Activated B cell treated with CpG ODN at 0.5 μM for 24 hours (primary cell): ENCODE measurements at regions of chr1 and their contacts with region 1.

Region 1: DNA sequence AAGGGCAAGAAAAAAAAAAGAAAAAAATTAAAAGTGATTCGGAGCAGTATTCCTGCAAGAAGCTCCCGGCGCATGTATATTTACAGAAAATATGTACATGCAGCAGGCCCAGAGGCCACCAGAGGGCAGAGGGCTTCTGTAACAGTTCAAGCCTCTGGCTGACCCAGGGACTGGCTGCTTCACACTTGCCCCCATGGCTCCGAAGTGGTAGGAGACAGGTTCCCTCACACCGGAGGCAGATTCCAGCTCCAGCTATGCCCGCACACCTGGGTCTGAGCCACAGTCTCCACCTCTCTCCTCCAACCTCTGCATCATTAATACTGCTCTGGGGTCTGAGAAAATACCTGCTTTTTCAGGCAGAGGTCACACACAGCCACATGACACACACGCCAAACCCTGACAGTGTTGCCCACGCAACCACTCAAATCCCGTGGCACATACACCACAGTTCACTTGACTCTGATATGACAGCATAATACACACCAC is 2.2 kb upstream of the ARHGAP30 start:
- DNase-seq: no peak
- ATAC-seq: peak; percentile 16
- H3K4me3 Mint-ChIP-seq: no peak overlapping the region
- H3K27ac Mint-ChIP-seq: peak overlapping the region; percentile 62
- H3K4me1 Mint-ChIP-seq: peaks cover 39% of the 10 kb centered on the region
- H3K27me3 Mint-ChIP-seq: no peaks in the 10 kb centered on the region
- CTCF ChIP-seq: peak; percentile 46

Region 2: DNA sequence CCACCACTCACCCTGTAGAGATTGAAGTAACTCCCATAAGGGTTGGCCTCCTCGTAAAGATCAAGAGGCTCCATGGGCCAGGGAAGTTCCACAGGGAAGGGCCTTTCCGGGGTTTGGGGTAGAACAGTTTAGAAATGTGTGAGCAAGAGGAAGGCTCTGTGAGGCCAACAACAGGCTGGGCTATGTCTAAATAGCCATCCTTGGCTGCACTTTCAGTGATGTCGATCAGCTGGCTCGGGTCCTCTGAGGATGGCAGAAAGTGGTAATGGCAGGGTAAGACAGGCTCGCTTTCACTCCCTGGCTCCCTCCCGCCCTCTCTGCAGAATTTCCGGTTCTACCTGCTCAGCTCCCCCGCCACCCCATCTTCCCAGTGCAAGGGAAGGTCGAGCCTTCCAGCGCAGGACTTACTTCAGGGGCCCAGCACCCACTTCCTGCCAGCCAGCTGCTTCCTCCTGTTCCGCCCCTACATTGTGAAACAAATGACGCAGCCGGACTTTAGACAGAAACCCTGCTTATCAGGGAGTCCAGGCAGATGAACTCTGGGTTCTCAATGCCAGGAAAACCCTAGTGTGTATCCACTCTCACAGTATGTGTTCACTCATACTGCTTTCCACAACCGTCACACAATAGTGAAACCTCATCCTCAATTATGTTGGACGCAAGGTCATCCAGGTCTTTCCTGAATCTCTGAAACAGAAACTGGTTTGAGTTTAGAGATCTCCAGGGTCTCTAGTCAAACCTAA is 58.3 kb before region 1 on chr1:
- CTCF ChIA-PET with region 1: interaction called, 3 read pairs
- POLR2A ChIA-PET with region 1: interaction called, 15 read pairs
- intact Hi-C with region 1: no loop called
- DNase-seq: peak; percentile 55
- ATAC-seq: peak; percentile 84
- H3K4me3 Mint-ChIP-seq: peak overlapping the region; percentile 87
- H3K27ac Mint-ChIP-seq: peak overlapping the region; percentile 98
- H3K4me1 Mint-ChIP-seq: peaks cover 23% of the 10 kb centered on the region
- H3K27me3 Mint-ChIP-seq: no peaks in the 10 kb centered on the region
- CTCF ChIP-seq: no peak

Region 3: GRCh38 chr1:161045750-161046571 is 26.0 kb before region 1 on chr1 and contains the start of gene USF1:
- CTCF ChIA-PET with region 1: interaction called, 37 read pairs
- POLR2A ChIA-PET with region 1: interaction called, 285 read pairs
- intact Hi-C with region 1: loop called (anchors 1 kb)
- DNase-seq: peak; percentile 91
- ATAC-seq: peak; percentile 62
- H3K4me3 Mint-ChIP-seq: peak within 1 kb of the TSS; percentile 95
- H3K27ac Mint-ChIP-seq: peak within 1 kb of the TSS; percentile 100
- H3K4me1 Mint-ChIP-seq: peaks cover 66% of the 10 kb centered on the region
- H3K27me3 Mint-ChIP-seq: no peaks in the 10 kb centered on the region
- CTCF ChIP-seq: no peak
- total RNA-seq, gene USF1: 134 and 143 TPM in 2 replicates

Region 4: DNA sequence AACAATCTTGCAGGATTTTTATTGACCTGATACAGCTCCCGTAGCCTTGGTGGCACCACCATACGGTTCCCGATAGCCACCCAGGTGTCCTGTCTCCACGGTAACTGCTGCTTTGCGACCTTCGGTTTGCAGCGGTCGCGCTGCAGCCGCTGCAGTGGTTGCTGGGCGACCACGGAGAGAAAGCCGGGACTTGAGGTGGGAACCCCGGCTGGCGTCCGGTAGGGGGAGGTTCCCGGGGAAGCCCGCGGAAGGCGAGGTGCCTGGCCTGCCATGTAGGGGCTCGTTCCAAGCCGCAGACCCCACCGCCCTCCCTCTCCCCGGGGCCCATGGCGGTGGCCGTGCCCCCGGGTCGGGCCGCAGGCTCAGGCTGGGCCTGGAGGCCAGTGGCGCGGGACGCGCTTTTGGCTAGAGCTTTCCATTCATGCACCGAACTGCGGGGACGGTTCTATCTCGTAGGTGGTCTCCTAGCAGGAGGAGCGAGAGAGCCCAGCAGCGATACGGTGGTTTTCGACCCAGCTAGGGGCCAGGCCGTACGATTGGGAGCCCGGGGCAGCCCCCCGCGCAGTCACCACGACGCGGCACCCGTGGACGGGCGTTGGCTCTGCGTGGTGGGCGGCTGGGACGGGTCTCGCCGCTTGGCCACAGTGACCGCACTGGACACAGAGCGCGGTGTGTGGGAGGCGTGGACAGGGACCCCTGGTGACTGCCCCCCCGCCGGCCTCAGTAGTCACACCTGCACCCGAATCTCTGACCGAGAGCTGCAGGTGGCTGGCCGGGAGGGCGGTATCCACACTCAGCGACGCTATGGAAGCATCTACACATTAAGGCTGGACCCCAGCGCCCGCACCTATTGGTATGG is 26.5 kb after region 1 on chr1 and contains the start of gene KLHDC9:
- CTCF ChIA-PET with region 1: interaction called, 95 read pairs
- POLR2A ChIA-PET with region 1: interaction called, 74 read pairs
- intact Hi-C with region 1: loop called (anchors 1 kb)
- DNase-seq: peak; percentile 77
- ATAC-seq: peak; percentile 79
- H3K4me3 Mint-ChIP-seq: peak within 1 kb of the TSS; percentile 88
- H3K27ac Mint-ChIP-seq: peak within 1 kb of the TSS; percentile 93
- H3K4me1 Mint-ChIP-seq: peaks cover 36% of the 10 kb centered on the region
- H3K27me3 Mint-ChIP-seq: no peaks in the 10 kb centered on the region
- CTCF ChIP-seq: peak; percentile 11
- total RNA-seq, gene KLHDC9: 2.9 and 3.6 TPM in 2 replicates

Region 5: GRCh38 chr1:161139765-161140164 is 67.8 kb after region 1 on chr1:
- CTCF ChIA-PET with region 1: interaction called, 15 read pairs
- POLR2A ChIA-PET with region 1: interaction called, 3 read pairs
- intact Hi-C with region 1: loop called (anchors 1 kb)
- DNase-seq: no peak
- ATAC-seq: peak; percentile 50
- H3K4me3 Mint-ChIP-seq: no peak overlapping the region
- H3K27ac Mint-ChIP-seq: no peak overlapping the region
- H3K4me1 Mint-ChIP-seq: peaks cover 4% of the 10 kb centered on the region
- H3K27me3 Mint-ChIP-seq: no peaks in the 10 kb centered on the region
- CTCF ChIP-seq: no peak

Region 6: GRCh38 chr1:161201828-161202725 is 130.1 kb after region 1 on chr1 and contains the start of gene NDUFS2:
- CTCF ChIA-PET with region 1: no interaction called
- POLR2A ChIA-PET with region 1: interaction called, 10 read pairs
- intact Hi-C with region 1: no loop called
- DNase-seq: peak; percentile 82
- ATAC-seq: peak; percentile 99
- H3K4me3 Mint-ChIP-seq: peak within 1 kb of the TSS; percentile 94
- H3K27ac Mint-ChIP-seq: peak within 1 kb of the TSS; percentile 94
- H3K4me1 Mint-ChIP-seq: peaks cover 38% of the 10 kb centered on the region
- H3K27me3 Mint-ChIP-seq: no peaks in the 10 kb centered on the region
- CTCF ChIP-seq: no peak
- total RNA-seq, gene NDUFS2: 69.1 and 73.9 TPM in 2 replicates